Breast epithelium (tissue), 4 donors: ENCODE measurements at regions of chr4 and their contacts with region 1.

Region 1: GRCh38 chr4:186743261-186743660 is 19.6 kb upstream of the FAT1 start:
- DNase-seq: no peak
- H3K4me3 ChIP-seq: no peak overlapping the region
- H3K27ac ChIP-seq: no peak overlapping the region
- H3K4me1 ChIP-seq: no peaks in the 10 kb centered on the region
- H3K27me3 ChIP-seq: no peaks in the 10 kb centered on the region
- CTCF ChIP-seq: no peak
- POLR2A ChIP-seq: no peak

Region 2: DNA sequence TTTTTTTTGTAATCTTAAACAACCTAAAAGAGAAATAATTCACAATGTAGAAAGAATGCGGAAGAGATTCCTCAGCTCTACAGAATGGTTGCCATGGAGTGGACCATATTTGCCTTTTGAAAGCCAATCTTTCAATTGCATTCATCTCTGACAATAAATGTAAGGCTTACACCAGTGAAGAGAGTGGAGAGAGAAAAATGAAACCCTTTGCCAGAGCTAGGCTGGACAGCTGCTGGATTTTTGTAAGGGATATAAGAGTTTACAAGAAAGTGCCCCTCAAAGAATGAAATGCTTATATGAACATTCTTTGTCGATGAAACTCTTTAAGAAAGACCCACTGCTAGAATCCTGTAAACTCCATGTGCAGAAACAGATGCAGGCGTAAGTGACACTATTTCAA is 46.4 kb after region 1 on chr4:
- intact Hi-C with region 1: loop called (anchors 2 kb)
- DNase-seq: no peak
- H3K4me3 ChIP-seq: no peak overlapping the region
- H3K27ac ChIP-seq: no peak overlapping the region
- H3K4me1 ChIP-seq: no peaks in the 10 kb centered on the region
- H3K27me3 ChIP-seq: no peaks in the 10 kb centered on the region
- CTCF ChIP-seq: no peak
- POLR2A ChIP-seq: no peak